ENCODE measurements at regions of chr11 and their contacts with region 1.

Region 1: DNA sequence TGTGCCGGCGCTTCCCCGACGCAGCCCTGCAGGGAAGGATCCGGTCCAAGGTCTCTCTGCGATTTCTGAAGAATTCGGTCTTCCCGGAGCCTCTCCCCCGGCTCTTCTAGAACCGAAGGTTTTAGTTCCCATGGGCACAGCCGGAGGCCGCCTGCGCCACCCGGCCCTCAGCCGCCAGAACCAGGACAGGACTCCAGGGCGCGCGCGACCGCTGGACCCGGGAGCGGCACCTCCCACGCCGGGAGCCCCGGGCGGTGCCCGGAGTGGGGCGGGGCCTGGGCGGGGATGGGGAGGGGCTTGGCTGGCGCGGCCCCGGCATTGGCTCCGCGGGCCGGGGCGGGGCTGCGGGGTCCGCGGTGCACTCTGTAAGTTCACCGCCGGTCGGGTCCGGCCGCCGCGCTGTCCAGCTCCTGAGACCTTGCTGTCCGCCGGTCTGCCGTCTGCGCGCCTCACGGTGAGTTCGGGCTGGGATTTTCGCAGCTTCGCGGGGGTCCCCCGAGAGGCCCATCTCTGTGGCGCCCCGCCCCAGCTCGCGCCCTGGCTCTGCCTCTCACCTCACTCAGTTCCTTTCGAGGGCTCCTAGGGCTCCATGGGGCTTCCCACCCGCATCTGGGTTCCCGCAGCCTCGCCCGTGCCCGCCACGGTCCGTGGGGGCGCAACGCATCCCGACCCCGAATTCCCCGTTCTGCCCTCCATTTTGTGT is at the start of gene CDC42EP2:
- DNase-seq: peak; percentile 71 to 83
- ATAC-seq: peak; percentile 76 to 78
- H3K4me3 ChIP-seq: peak within 1 kb of the TSS; percentile 83 to 95 (median 92)
- H3K27ac ChIP-seq: peak within 1 kb of the TSS; percentile 86 to 92 (median 90)
- H3K4me1 ChIP-seq: peaks cover 18 to 32% of the 10 kb centered on the region in 2 donors
- H3K27me3 ChIP-seq: no peaks in the 10 kb centered on the region
- CTCF ChIP-seq: peak in 1 of 5 experiments; percentile 12
- POLR2A ChIP-seq: peak; percentile 68 to 89
- total RNA-seq, gene CDC42EP2: 5.0 to 11.6 (median 5.6) TPM

Region 2: DNA sequence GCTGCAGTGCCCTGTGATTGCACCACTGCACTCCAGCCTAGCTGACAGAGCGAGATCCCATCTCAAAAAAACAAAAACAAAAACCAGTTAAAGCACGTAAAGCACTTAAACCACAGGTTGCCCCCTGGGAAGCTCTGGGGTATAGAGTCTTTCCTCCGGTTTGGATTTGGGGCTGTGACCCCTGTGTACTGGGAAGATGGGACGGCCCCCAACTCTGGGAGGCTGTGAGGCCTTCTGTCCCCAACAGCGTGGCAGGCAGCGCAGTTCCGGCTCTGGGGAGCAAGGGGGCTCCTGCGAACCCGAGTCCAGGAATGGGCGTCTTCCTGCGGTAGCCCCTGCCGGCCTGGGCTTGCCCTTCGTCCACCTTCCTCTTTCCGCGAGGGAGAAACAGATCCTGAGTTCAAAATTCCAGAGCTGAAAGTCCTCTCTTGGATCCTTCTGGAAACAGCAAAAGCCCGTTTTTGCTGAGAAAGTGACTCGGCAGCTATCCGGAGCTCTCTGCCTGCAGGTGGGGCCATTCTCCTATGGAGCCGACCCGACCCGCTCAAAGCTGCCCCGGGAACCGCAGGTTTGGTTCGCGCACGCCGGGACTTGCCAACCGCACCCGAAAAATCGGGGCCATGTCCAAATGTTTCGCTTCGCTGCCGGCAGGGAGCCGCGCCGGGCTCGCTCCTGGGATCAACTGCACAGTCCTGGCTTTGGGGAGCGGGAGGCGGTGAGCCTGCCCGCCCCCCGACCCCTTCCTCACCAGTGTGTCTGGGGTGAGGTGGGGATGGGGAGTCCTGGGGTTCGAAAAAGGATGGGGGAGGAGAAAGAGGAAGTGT is 89.2 kb before region 1 on chr11:
- in situ Hi-C with region 1: loop called in 2 of 4 experiments (anchors 5 to 10 kb)
- intact Hi-C with region 1: no loop called
- DNase-seq: peak; percentile 24 to 42
- ATAC-seq: peak; percentile 59 to 67
- H3K4me3 ChIP-seq: peak overlapping the region; percentile 46 to 60 (median 53)
- H3K27ac ChIP-seq: peak overlapping the region; percentile 19 to 52 (median 42)
- H3K4me1 ChIP-seq: peaks cover 3 to 4% of the 10 kb centered on the region in 2 donors
- H3K27me3 ChIP-seq: no peaks in the 10 kb centered on the region
- CTCF ChIP-seq: peak in 4 of 5 experiments; percentile 13 to 48 (median 41)
- POLR2A ChIP-seq: no peak

Region 3: GRCh38 chr11:65274735-65275682 is 39.6 kb before region 1 on chr11:
- in situ Hi-C with region 1: loop called in 1 of 4 experiments (anchors 5 kb)
- intact Hi-C with region 1: loop called (anchors 1 kb)
- DNase-seq: peak; percentile 69 to 73
- ATAC-seq: peak; percentile 87 to 92
- H3K4me3 ChIP-seq: no peak overlapping the region
- H3K27ac ChIP-seq: peak overlapping the region in 2 of 4 donors; percentile 22 to 30
- H3K4me1 ChIP-seq: peaks cover 0 to 5% of the 10 kb centered on the region in 2 donors
- H3K27me3 ChIP-seq: no peaks in the 10 kb centered on the region
- CTCF ChIP-seq: peak; percentile 79 to 93 (median 90)
- POLR2A ChIP-seq: no peak

Region 4: DNA sequence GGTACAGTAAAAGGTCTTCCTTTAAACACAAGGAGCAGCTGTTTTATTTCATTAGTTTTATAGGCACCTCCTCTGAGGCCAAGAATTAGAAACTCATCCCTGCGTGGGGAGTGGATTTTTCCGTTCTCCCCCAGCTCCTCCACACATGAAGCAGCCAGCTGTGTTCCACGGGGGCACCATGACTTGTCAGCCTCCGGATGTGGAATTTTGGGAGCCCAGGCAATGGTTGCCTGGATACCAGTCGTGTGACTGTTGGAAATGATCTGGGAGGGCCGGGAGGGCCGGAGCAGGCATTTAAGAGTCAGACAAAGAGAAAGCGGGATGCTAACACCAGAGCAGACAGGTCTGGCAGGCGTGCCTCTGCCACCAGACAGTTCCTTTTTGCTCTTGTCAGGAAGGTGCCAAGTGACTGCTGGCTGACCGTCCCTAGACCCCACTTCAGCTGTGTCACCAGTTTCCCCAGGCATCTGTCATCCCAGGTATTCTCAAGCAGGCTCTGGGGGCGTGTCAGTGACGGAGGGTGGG is 15.9 kb before region 1 on chr11:
- in situ Hi-C with region 1: no loop called
- intact Hi-C with region 1: loop called (anchors 2 kb)
- DNase-seq: peak in 1 of 2 donors; percentile 49
- ATAC-seq: peak; percentile 20 to 25
- H3K4me3 ChIP-seq: no peak overlapping the region
- H3K27ac ChIP-seq: peak overlapping the region; percentile 53 to 79 (median 74)
- H3K4me1 ChIP-seq: peaks cover 20 to 41% of the 10 kb centered on the region in 2 donors
- H3K27me3 ChIP-seq: no peaks in the 10 kb centered on the region
- CTCF ChIP-seq: no peak
- POLR2A ChIP-seq: no peak

Region 5: DNA sequence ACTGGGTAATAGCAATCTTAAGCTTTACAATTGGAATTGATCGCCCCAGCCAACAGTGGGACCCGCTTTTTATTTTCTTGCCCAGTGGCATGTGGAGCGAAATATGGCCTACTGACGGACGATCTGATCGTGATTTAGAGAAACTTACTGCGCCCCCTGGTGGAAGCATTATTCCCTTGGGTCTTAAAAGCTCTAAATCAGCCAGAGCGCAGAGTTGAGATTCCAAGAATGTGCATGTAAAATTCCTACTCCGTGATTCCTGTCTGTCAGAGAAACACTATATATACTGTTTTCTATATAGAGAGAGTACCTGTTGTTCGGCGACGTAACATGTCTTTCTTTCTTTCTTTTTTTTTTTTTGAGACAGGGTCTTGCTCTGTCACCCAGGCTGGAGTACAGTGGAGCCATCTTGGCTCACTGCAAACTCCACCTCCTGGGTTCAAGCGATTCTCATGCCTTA is 15.3 kb after region 1 on chr11:
- in situ Hi-C with region 1: no loop called
- intact Hi-C with region 1: loop called (anchors 1 kb)
- DNase-seq: peak; percentile 76 to 80
- ATAC-seq: peak; percentile 60 to 67
- H3K4me3 ChIP-seq: no peak overlapping the region
- H3K27ac ChIP-seq: peak overlapping the region in 2 of 4 donors; percentile 35 to 45
- H3K4me1 ChIP-seq: peaks cover 7 to 10% of the 10 kb centered on the region in 2 donors
- H3K27me3 ChIP-seq: no peaks in the 10 kb centered on the region
- CTCF ChIP-seq: peak; percentile 75 to 86 (median 84)
- POLR2A ChIP-seq: no peak